ENCODE measurements at regions of chr11 and their contacts with region 1.

Region 1: DNA sequence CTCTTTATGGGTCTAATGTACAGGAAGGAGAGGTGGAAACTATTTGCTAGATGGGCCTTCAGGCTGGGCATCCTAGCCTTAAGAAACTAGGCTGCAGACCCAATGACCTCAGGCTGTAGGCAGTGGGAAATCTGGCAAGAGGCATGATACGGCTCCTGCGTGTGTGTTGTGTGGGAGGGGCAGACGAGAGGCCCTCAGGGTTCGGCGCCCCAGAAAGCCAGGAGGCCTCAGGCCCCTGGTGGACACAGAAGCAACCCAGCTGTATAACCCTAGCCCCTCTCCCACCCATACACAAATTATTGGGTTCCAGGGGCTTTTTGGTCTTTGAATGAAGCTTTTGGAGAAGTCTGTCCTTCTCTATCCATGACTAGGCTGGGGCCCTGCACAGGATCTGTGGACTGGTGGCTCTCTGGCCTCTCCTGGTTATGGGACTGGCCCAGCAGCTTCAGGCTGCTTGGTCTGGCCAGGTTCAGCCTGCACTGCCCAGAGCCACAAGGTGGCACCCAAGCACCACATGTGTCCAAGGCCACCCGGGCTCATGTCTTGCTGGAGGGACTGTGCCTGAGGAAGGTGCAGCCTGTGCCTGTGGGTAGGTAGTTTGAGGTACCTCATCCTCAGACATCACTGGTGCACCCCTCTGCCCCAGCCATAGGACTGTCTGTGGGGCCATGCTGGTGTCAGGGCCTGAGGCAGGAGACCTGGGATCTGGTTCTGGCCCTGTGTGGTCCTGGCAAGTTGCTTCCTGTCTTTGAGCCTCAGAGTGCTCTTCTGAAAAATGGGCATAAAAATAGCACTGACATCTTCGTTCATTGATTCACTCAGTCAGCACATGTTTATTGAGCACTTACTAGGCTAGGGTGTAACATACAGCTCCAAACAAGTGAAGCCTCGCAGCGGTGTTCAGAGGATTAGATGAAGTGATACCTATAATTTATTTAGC is 87.5 kb downstream of the RRM1 start:
- DNase-seq: no peak
- H3K4me3 ChIP-seq: no peak overlapping the region
- CTCF ChIP-seq: peak; percentile 88

Region 2: DNA sequence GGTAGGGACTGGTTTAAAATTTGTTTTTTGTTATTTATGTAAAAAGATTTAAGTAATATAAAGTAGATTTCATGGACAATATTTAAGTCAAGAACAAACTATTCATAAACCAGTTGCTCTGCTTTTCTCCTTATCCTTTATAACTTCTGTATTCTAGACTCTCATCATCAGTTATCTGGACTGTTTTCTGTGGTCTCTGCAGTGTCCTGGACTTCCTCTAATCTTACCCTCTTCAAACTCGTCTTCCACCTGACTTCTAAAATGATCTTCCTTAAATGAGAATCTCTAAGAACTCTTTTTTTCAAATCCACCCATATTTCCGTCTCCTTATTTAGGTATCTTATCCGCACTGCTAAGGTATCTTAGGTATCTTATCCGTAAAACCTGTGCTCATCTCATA is 79.3 kb before region 1 on chr11:
- CTCF ChIA-PET with region 1: no interaction called
- POLR2A ChIA-PET with region 1: no interaction called
- DNase-seq: no peak
- H3K4me3 ChIP-seq: no peak overlapping the region
- CTCF ChIP-seq: no peak

Region 3: DNA sequence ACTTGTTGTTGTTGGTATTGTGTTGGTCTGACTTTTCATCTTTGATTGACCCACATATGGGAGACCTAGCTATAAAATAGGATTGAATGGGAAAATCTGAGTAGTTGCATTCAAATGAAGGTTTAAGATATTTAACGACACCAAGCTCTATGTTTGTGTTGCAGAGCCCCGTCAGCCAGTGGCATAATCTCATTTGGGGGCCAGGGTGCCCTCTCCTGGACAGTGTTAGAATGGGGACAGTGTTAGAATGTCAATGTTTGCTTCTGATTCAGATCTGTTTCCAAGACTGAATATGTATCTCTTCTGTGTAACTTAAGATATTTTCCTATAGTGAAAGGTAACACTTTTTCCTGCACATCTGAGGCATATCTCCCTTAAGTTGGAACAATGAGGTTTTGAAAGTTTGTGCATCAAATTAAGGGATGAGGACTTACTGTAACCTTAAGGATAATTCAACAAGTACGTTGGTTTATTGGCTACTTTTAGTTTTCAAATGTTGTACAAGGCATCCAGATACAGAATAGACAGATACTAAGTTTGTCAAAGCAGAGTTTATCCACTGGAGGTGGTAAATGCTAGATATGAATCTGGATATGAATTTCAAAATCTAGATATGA is 357.7 kb after region 1 on chr11:
- CTCF ChIA-PET with region 1: interaction called, 123 read pairs
- POLR2A ChIA-PET with region 1: interaction called, 4 read pairs
- DNase-seq: no peak
- H3K4me3 ChIP-seq: no peak overlapping the region
- CTCF ChIP-seq: peak; percentile 51

Region 4: GRCh38 chr11:4615856-4616444 is 433.9 kb after region 1 on chr11:
- CTCF ChIA-PET with region 1: no interaction called
- POLR2A ChIA-PET with region 1: no interaction called
- DNase-seq: no peak
- H3K4me3 ChIP-seq: no peak overlapping the region
- CTCF ChIP-seq: no peak